PC-3 (cell line): ENCODE measurements at regions of chr3 and their contacts with region 1.

Region 1: GRCh38 chr3:101069901-101070798 is 76.9 kb upstream of the ABI3BP start:
- DNase-seq: peak; percentile 70
- ATAC-seq: peak; percentile 23; the same call in 1 of the 2 replicates
- H3K4me3 ChIP-seq: no peak overlapping the region
- H3K27ac ChIP-seq: peak overlapping the region; percentile 22
- H3K4me1 ChIP-seq: peaks cover 52% of the 10 kb centered on the region
- H3K27me3 ChIP-seq: no peaks in the 10 kb centered on the region
- CTCF ChIP-seq: peak; percentile 92

Region 2: DNA sequence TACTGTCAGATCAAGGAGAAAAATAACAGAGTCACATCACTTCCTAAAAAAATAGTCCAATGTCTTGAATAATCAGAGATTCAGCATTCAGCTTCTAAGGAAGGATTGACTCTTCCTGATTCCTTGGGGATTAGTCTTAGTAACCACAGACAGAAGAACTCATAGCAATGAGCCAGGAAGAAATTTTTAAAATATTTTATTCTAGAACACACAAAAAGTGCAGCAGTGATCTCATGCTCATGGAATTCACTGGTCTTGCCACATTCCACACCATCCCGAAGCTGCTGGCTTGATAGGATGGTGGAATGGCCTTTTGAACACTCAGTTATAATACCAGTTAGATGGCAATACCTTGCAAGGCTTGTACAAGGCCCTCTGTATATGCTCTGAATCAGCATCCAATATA is 33.9 kb before region 1 on chr3:
- CTCF ChIA-PET with region 1: no interaction called
- POLR2A ChIA-PET with region 1: no interaction called
- intact Hi-C with region 1: loop called (anchors 5 kb)
- DNase-seq: peak; percentile 99
- ATAC-seq: peak; percentile 96
- H3K4me3 ChIP-seq: 0 out of 2 replicates have a peak overlapping the region, but pooled peaks have one; percentile 0
- H3K27ac ChIP-seq: peak overlapping the region; percentile 65
- H3K4me1 ChIP-seq: peaks cover 45% of the 10 kb centered on the region
- H3K27me3 ChIP-seq: no peaks in the 10 kb centered on the region
- CTCF ChIP-seq: no peak

Region 3: DNA sequence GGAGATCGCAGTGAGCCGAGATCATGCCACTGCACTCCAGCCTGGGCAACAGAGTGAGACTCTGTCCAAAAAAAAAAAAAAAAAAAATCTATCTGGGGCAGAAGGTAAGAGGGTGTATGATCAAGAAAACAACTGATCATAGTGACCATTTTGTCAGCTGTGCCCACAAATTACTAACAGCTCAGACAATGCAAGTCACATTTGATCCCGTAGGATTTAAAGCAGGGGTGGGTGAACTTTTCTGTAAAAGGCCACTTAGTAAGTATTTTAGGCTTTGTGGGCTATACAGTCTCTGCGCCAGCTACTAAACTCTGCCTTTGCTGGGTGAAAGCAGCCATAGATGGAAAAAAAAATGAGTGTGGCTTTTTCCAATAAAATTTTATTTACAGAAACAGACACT is 19.3 kb before region 1 on chr3:
- CTCF ChIA-PET with region 1: no interaction called
- POLR2A ChIA-PET with region 1: interaction called, 10 read pairs
- intact Hi-C with region 1: no loop called
- DNase-seq: no peak
- ATAC-seq: no peak
- H3K4me3 ChIP-seq: no peak overlapping the region
- H3K27ac ChIP-seq: no peak overlapping the region
- H3K4me1 ChIP-seq: no peaks in the 10 kb centered on the region
- H3K27me3 ChIP-seq: no peaks in the 10 kb centered on the region
- CTCF ChIP-seq: no peak